Left ventricle myocardium superior (tissue), 1 donor: ENCODE measurements at regions of chr1 and their contacts with region 1.

Region 1: GRCh38 chr1:116671912-116672311 is 4.4 kb upstream of the IGSF3 start:
- DNase-seq: no peak
- ATAC-seq: peak; percentile 21

Region 2: GRCh38 chr1:116544588-116545358 is 127.1 kb before region 1 on chr1:
- intact Hi-C with region 1: no loop called
- DNase-seq: no peak
- ATAC-seq: no peak

Region 3: DNA sequence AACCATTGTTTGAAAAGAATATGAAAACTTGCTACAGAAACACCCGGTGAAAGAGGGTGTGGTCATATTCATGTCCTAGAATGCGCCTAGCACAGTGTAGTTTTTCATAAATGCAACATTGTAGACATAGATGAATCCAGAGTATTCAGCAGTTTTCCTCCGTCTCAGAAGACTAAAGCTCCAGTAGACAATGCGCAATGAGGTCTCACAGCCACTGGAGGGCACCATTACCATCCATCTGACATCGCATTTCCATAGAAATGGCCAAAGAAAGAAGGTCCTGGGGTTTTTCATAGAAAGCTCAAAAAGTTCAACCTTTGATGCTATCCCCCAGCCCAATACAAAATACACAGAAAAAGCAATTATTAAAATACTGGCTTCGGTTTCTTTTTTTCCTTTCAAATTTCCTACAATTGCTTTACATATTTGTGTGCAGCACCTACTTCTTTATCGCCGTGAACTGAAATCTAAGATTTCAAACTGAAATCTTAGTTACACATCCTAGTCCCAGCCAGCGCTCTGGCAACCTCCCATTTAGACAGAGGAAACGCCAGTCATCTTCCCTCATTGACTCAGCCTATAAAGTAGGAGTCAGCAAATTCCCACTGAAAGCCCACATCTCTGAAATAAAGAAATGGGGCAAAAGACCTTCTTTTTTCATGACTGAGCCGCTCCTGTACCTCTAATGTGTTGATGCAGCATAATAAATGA is 97.2 kb before region 1 on chr1:
- intact Hi-C with region 1: loop called (anchors 2 kb)
- DNase-seq: peak; percentile 54
- ATAC-seq: no peak

Region 4: GRCh38 chr1:116722016-116722838 is 50.3 kb after region 1 on chr1:
- intact Hi-C with region 1: no loop called
- DNase-seq: no peak
- ATAC-seq: no peak

Region 5: GRCh38 chr1:117180147-117180967 is 508.4 kb after region 1 on chr1:
- intact Hi-C with region 1: no loop called
- DNase-seq: no peak
- ATAC-seq: no peak